Psoas muscle (tissue), 8 donors: ENCODE measurements at regions of chr1 and their contacts with region 1.

Region 1: GRCh38 chr1:229003233-229004031 is 267.5 kb upstream of the RAB4A start:
- DNase-seq: peak in 1 of 2 donors; percentile 64
- ATAC-seq: no peak
- H3K4me3 ChIP-seq: no peak overlapping the region
- H3K27ac ChIP-seq: no peak overlapping the region
- H3K4me1 ChIP-seq: no peaks in the 10 kb centered on the region
- H3K27me3 ChIP-seq: no peaks in the 10 kb centered on the region
- CTCF ChIP-seq: no peak

Region 2: GRCh38 chr1:228955691-228956090 is 47.7 kb before region 1 on chr1:
- intact Hi-C with region 1: no loop called
- DNase-seq: no peak
- ATAC-seq: no peak
- H3K4me3 ChIP-seq: no peak overlapping the region
- H3K27ac ChIP-seq: no peak overlapping the region
- H3K4me1 ChIP-seq: peaks cover 16% of the 10 kb centered on the region
- H3K27me3 ChIP-seq: no peaks in the 10 kb centered on the region
- CTCF ChIP-seq: no peak

Region 3: GRCh38 chr1:228976316-228976715 is 27.1 kb before region 1 on chr1:
- intact Hi-C with region 1: loop called in 1 of 2 experiments (anchors 1 kb)
- DNase-seq: no peak
- ATAC-seq: no peak
- H3K4me3 ChIP-seq: no peak overlapping the region
- H3K27ac ChIP-seq: no peak overlapping the region
- H3K4me1 ChIP-seq: peaks cover 5% of the 10 kb centered on the region
- H3K27me3 ChIP-seq: no peaks in the 10 kb centered on the region
- CTCF ChIP-seq: no peak

Region 4: GRCh38 chr1:229507951-229508822 is 504.8 kb after region 1 on chr1 and contains the start of gene NUP133:
- intact Hi-C with region 1: loop called in 1 of 2 experiments (anchors 2 kb)
- DNase-seq: peak; percentile 100
- ATAC-seq: peak; percentile 97 to 98 (median 98)
- H3K4me3 ChIP-seq: peak within 1 kb of the TSS; percentile 89
- H3K27ac ChIP-seq: peak within 1 kb of the TSS; percentile 94
- H3K4me1 ChIP-seq: peaks cover 10% of the 10 kb centered on the region
- H3K27me3 ChIP-seq: no peaks in the 10 kb centered on the region
- CTCF ChIP-seq: no peak
- total RNA-seq, gene NUP133: 24.1 to 29.3 (median 26.4) TPM